GM12878 (cell line): ENCODE measurements at regions of chr5 and their contacts with region 1.

Region 1: DNA sequence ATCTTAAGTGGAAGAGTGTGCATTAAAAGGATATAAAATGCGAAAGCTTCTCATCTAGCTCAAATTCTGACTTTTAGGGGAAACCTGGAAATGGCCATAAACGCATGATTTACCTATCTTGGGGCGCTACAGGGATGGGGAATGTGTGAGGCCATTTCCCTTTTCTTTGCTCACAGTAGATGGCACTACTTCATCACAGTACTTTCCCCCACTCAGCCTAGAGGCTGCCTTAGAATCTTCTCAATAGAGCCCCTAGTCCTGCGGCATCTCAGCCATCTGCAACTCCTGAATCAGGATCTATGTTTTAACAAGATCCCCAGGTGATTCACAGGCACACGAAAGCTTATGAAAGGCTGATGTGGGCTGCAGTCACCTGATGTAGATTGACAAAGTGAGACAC is 110.8 kb downstream of the LHFPL2 start:
- DNase-seq: no peak
- ATAC-seq: peak; percentile 84
- H3K4me3 ChIP-seq: no peak overlapping the region
- H3K27ac ChIP-seq: no peak overlapping the region
- H3K4me1 ChIP-seq: peaks cover 5% of the 10 kb centered on the region
- H3K27me3 ChIP-seq: no peaks in the 10 kb centered on the region
- CTCF ChIP-seq: peak; percentile 42 to 73 (median 57)
- EP300 ChIP-seq: no peak
- POLR2A ChIP-seq: no peak
- RAD21 ChIP-seq: peak; percentile 83

Region 2: GRCh38 chr5:78162253-78162862 is 375.5 kb before region 1 on chr5:
- CTCF ChIA-PET with region 1: no interaction called
- POLR2A ChIA-PET with region 1: no interaction called
- RAD21 ChIA-PET with region 1: no interaction called
- SMC1A ChIA-PET with region 1: no interaction called
- in situ Hi-C with region 1: no loop called
- intact Hi-C with region 1: no loop called
- DNase-seq: no peak
- ATAC-seq: peak; percentile 61
- H3K4me3 ChIP-seq: no peak overlapping the region
- H3K27ac ChIP-seq: no peak overlapping the region
- H3K4me1 ChIP-seq: no peaks in the 10 kb centered on the region
- H3K27me3 ChIP-seq: no peaks in the 10 kb centered on the region
- CTCF ChIP-seq: peak; percentile 47 to 66 (median 47); a peak in 5 of 6 replicates
- EP300 ChIP-seq: no peak
- POLR2A ChIP-seq: no peak
- RAD21 ChIP-seq: peak; percentile 82

Region 3: DNA sequence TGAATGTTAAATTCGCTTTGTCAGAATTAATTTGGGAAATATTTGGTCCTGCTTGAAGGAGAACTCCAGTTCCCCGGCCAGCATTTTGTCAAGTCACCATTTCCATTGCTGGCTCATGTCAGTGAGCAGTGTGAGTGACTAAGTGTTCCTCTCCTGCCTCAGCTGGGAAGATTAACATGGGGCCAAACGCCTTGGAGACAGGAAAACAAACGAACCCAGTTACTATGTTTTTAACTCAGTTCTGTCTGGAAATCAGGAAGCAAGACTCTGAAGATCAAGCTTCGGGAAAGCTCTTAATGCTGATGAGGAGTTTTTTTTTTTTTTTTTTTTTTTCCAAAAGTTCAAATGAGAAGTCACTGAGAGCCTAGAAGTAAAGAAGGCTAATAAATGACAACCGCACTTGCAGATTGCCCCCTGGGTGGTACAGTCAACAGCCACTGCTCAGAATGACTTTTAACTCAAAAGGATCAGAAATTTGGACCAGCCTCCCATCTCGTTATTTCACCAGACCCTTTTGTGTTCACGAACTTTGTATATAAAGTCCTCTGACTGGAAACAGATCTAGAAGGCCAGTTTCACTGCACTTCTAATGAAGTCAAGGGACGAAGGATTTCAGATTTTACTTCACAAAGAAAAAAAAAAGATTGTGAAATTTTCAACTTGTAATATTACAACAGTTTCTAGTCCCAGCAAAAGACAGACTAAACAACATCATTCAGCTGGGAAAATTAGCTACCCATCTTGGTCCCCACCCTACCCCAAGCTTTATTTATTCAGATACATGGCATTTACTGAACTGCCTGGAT is 10.6 kb before region 1 on chr5:
- CTCF ChIA-PET with region 1: interaction called, 9 read pairs
- POLR2A ChIA-PET with region 1: no interaction called
- RAD21 ChIA-PET with region 1: interaction called, 4 read pairs
- SMC1A ChIA-PET with region 1: interaction called, 22 read pairs
- in situ Hi-C with region 1: no loop called
- intact Hi-C with region 1: no loop called
- DNase-seq: no peak
- ATAC-seq: no peak
- H3K4me3 ChIP-seq: no peak overlapping the region
- H3K27ac ChIP-seq: no peak overlapping the region
- H3K4me1 ChIP-seq: peaks cover 16% of the 10 kb centered on the region
- H3K27me3 ChIP-seq: no peaks in the 10 kb centered on the region
- CTCF ChIP-seq: no peak
- EP300 ChIP-seq: no peak
- POLR2A ChIP-seq: no peak
- RAD21 ChIP-seq: no peak

Region 4: GRCh38 chr5:78574731-78575161 is 36.9 kb after region 1 on chr5:
- CTCF ChIA-PET with region 1: interaction called, 8 read pairs
- POLR2A ChIA-PET with region 1: no interaction called
- RAD21 ChIA-PET with region 1: interaction called, 7 read pairs
- SMC1A ChIA-PET with region 1: interaction called, 18 read pairs
- in situ Hi-C with region 1: no loop called
- intact Hi-C with region 1: no loop called
- DNase-seq: peak; percentile 64
- ATAC-seq: peak; percentile 95
- H3K4me3 ChIP-seq: peak overlapping the region; percentile 1; the same call in 1 of the 2 replicates
- H3K27ac ChIP-seq: peak overlapping the region; percentile 93
- H3K4me1 ChIP-seq: peaks cover 25% of the 10 kb centered on the region
- H3K27me3 ChIP-seq: no peaks in the 10 kb centered on the region
- CTCF ChIP-seq: no peak
- EP300 ChIP-seq: no peak; a peak in 1 of 4 replicates
- POLR2A ChIP-seq: 0 out of 2 replicates have a peak, but pooled peaks have one; percentile 30
- RAD21 ChIP-seq: no peak

Region 5: GRCh38 chr5:78720227-78720985 is 182.6 kb after region 1 on chr5:
- CTCF ChIA-PET with region 1: no interaction called
- POLR2A ChIA-PET with region 1: interaction called, 10 read pairs
- RAD21 ChIA-PET with region 1: interaction called, 4 read pairs
- SMC1A ChIA-PET with region 1: no interaction called
- in situ Hi-C with region 1: no loop called
- intact Hi-C with region 1: no loop called
- DNase-seq: no peak
- ATAC-seq: peak; percentile 15; the same call in 2 of the 3 replicates
- H3K4me3 ChIP-seq: no peak overlapping the region
- H3K27ac ChIP-seq: no peak overlapping the region
- H3K4me1 ChIP-seq: peaks cover 13% of the 10 kb centered on the region
- H3K27me3 ChIP-seq: no peaks in the 10 kb centered on the region
- CTCF ChIP-seq: no peak
- EP300 ChIP-seq: no peak
- POLR2A ChIP-seq: no peak
- RAD21 ChIP-seq: no peak

Region 6: DNA sequence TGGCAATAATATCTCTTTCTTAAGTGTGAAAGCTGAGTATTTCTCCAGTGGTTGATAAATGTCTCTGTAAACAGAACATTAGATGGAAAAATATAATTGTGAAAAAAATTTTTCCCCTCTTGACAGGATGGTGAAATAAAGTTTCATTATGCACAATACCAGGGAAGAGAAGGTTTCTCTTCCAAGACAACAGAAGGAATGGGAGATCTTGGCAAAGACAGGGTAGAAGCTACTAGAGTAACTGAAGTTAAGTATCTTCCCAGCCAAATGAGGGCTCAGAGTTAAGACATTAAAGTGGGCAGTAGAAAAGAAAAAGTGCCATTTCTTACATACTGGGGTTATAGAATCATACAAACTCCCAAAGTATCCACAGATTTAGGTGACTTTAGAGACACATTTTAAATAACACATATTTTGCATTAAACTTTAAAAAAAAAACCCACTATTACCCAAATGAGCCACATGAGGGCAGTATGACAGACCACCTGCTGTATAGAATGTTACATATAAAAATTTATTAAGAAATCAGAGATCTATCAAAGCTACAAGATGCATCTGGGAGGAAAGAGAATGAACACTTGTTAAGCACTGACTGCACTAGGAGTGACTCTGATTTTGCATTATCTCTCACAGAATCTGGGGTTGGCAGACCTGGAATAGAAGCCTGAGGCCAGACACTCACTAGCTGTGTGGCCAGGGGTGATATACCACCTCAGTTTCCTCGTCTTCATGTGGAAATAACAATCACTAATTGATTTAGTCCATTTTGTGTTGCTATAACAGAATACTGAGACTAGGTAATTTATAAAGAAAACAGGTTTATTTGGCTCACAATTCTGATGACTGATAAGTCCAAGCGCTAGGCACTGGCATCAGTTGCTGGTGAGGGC is 348.8 kb after region 1 on chr5:
- CTCF ChIA-PET with region 1: interaction called, 11 read pairs
- POLR2A ChIA-PET with region 1: no interaction called
- RAD21 ChIA-PET with region 1: interaction called, 3 read pairs
- SMC1A ChIA-PET with region 1: interaction called, 8 read pairs
- in situ Hi-C with region 1: no loop called
- intact Hi-C with region 1: loop called (anchors 5 kb)
- DNase-seq: no peak
- ATAC-seq: peak; percentile 25
- H3K4me3 ChIP-seq: no peak overlapping the region
- H3K27ac ChIP-seq: no peak overlapping the region
- H3K4me1 ChIP-seq: peaks cover 21% of the 10 kb centered on the region
- H3K27me3 ChIP-seq: no peaks in the 10 kb centered on the region; a peak in 1 of 4 replicates
- CTCF ChIP-seq: peak; percentile 37 to 52 (median 38); a peak in 5 of 6 replicates
- EP300 ChIP-seq: no peak
- POLR2A ChIP-seq: no peak
- RAD21 ChIP-seq: peak; percentile 51

Region 7: GRCh38 chr5:78964887-78965286 is 427.1 kb after region 1 on chr5:
- CTCF ChIA-PET with region 1: interaction called, 68 read pairs
- POLR2A ChIA-PET with region 1: interaction called, 3 read pairs
- RAD21 ChIA-PET with region 1: interaction called, 7 read pairs
- SMC1A ChIA-PET with region 1: interaction called, 15 read pairs
- in situ Hi-C with region 1: loop called (anchors 5 kb)
- intact Hi-C with region 1: loop called (anchors 2 kb)
- DNase-seq: no peak
- ATAC-seq: peak; percentile 88
- H3K4me3 ChIP-seq: no peak overlapping the region
- H3K27ac ChIP-seq: no peak overlapping the region
- H3K4me1 ChIP-seq: no peaks in the 10 kb centered on the region
- H3K27me3 ChIP-seq: no peaks in the 10 kb centered on the region
- CTCF ChIP-seq: peak; percentile 43 to 70 (median 45); a peak in 4 of 6 replicates
- EP300 ChIP-seq: no peak
- POLR2A ChIP-seq: no peak
- RAD21 ChIP-seq: peak; percentile 92